Colonic mucosa (tissue), 4 donors: ENCODE measurements at regions of chr3 and their contacts with region 1.

Region 1: GRCh38 chr3:80688814-80689213 is 921.0 kb upstream of the ROBO1 start:
- DNase-seq: no peak
- H3K4me3 ChIP-seq: no peak overlapping the region
- H3K27ac ChIP-seq: no peak overlapping the region
- H3K4me1 ChIP-seq: no peaks in the 10 kb centered on the region
- H3K27me3 ChIP-seq: no peaks in the 10 kb centered on the region
- CTCF ChIP-seq: no peak

Region 2: GRCh38 chr3:79521238-79521848 is 1167.5 kb before region 1 on chr3:
- intact Hi-C with region 1: loop called (anchors 10 kb)
- DNase-seq: no peak
- H3K4me3 ChIP-seq: no peak overlapping the region
- H3K27ac ChIP-seq: no peak overlapping the region
- H3K4me1 ChIP-seq: no peaks in the 10 kb centered on the region
- H3K27me3 ChIP-seq: no peaks in the 10 kb centered on the region
- CTCF ChIP-seq: peak; percentile 45